Activated CD4-positive, alpha-beta T cell treated with anti-CD3 and anti-CD28 coated beads for 36 hours (primary cell): ENCODE measurements at regions of chr7 and their contacts with region 1.

Region 1: DNA sequence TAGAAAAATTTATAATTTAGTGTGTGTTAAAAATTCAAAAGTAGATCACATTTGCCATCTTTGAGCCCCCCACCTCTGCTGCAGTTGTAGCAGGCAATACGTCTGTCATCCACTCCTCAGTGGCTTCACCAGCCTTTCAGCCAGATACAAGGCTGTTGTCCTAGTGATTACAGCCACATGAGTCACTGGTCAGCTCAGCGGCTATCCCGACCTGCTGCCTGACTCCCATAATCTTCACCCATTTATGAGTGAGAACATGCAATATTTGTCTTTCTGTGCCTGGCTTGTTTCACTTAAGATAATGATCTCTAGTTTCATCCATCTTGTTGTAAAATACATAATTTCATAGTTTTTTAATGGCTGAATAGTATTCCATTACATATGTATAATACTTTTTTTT is 9.2 kb downstream of the OR2A5 start:
- DNase-seq: no peak
- ATAC-seq: no peak
- H3K4me3 Mint-ChIP-seq: no peak overlapping the region
- H3K27ac Mint-ChIP-seq: no peak overlapping the region
- H3K4me1 Mint-ChIP-seq: no peaks in the 10 kb centered on the region
- H3K27me3 Mint-ChIP-seq: peaks cover 6% of the 10 kb centered on the region

Region 2: GRCh38 chr7:144027070-144027469 is 30.9 kb before region 1 on chr7:
- CTCF ChIA-PET with region 1: no interaction called
- POLR2A ChIA-PET with region 1: no interaction called
- intact Hi-C with region 1: no loop called
- DNase-seq: no peak
- ATAC-seq: no peak
- H3K4me3 Mint-ChIP-seq: no peak overlapping the region
- H3K27ac Mint-ChIP-seq: no peak overlapping the region
- H3K4me1 Mint-ChIP-seq: peaks cover 6% of the 10 kb centered on the region
- H3K27me3 Mint-ChIP-seq: peaks cover 5% of the 10 kb centered on the region

Region 3: GRCh38 chr7:144118339-144118738 is 60.4 kb after region 1 on chr7:
- CTCF ChIA-PET with region 1: no interaction called
- POLR2A ChIA-PET with region 1: no interaction called
- intact Hi-C with region 1: loop called in 1 of 2 experiments (anchors 10 kb)
- DNase-seq: no peak
- ATAC-seq: no peak
- H3K4me3 Mint-ChIP-seq: no peak overlapping the region
- H3K27ac Mint-ChIP-seq: no peak overlapping the region
- H3K4me1 Mint-ChIP-seq: no peaks in the 10 kb centered on the region
- H3K27me3 Mint-ChIP-seq: no peaks in the 10 kb centered on the region

Region 4: GRCh38 chr7:145729691-145730090 is 1671.7 kb after region 1 on chr7:
- CTCF ChIA-PET with region 1: no interaction called
- POLR2A ChIA-PET with region 1: no interaction called
- intact Hi-C with region 1: no loop called
- DNase-seq: no peak
- ATAC-seq: no peak
- H3K4me3 Mint-ChIP-seq: no peak overlapping the region
- H3K27ac Mint-ChIP-seq: no peak overlapping the region
- H3K4me1 Mint-ChIP-seq: no peaks in the 10 kb centered on the region
- H3K27me3 Mint-ChIP-seq: no peaks in the 10 kb centered on the region